IMR-90 (cell line): ENCODE measurements at regions of chr6 and their contacts with region 1.

Region 1: GRCh38 chr6:136547336-136547735 is 2.9 kb downstream of the MAP7 start:
- DNase-seq: peak; percentile 63
- ATAC-seq: no peak
- H3K4me3 ChIP-seq: no peak overlapping the region
- H3K27ac ChIP-seq: no peak overlapping the region
- H3K4me1 ChIP-seq: peaks cover 3% of the 10 kb centered on the region; the same call in 1 of the 2 replicates
- H3K27me3 ChIP-seq: peaks cover 42% of the 10 kb centered on the region
- CTCF ChIP-seq: peak; percentile 69
- POLR2A ChIP-seq: no peak
- RAD21 ChIP-seq: peak; percentile 67

Region 2: DNA sequence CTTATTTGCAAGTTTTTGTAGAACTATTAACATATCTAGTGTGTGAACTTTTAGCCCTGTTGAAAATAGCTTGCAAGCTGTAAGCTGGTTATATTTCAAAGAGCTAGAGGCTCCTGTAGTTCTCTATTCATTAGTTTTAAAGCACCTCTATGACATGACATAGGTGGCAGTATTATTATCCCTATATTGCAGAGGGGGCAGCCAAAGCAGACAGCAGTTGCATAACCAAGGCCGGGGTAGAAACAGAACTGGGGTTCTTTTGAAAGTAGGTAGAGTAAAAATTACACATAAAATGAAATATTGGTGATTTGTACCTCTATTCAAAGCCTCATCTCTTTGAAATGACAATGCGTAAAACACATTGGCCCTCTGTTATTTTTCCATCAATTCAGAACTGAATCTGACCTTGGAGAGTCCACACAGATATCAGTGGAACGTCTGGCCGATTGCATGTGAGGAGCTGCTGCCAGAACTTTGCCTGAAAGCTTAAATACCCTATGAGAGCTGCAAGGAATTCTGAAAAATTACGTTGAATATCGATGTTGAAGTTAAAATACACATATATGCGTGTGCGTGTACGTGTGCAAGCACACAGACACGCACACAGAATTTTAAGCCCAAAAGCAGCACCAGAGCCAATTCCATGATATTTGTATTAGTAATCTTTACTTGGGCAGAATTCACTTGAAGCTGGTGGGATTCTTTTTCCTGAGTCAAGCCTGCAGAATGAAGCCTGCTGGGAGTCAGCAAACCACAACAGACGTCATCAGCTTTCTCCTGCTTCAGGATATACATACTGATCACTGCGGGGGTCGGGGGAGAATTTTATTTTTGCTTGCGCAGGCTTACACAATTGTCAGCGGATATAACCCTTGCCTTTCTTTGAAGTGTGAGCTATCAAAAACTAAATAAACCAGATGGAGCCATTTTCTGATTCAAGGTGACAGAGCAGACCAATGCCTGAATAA is 532.6 kb before region 1 on chr6:
- CTCF ChIA-PET with region 1: no interaction called
- POLR2A ChIA-PET with region 1: no interaction called
- dilution Hi-C with region 1: no loop called
- in situ Hi-C with region 1: no loop called
- intact Hi-C with region 1: no loop called
- DNase-seq: peak; percentile 100
- ATAC-seq: peak; percentile 81
- H3K4me3 ChIP-seq: no peak overlapping the region
- H3K27ac ChIP-seq: peak overlapping the region; percentile 99
- H3K4me1 ChIP-seq: peaks cover 23% of the 10 kb centered on the region
- H3K27me3 ChIP-seq: no peaks in the 10 kb centered on the region
- CTCF ChIP-seq: no peak
- POLR2A ChIP-seq: peak; percentile 78
- RAD21 ChIP-seq: peak; percentile 22

Region 3: GRCh38 chr6:136249811-136250685 is 297.3 kb before region 1 on chr6 and contains the start of gene MTFR2:
- CTCF ChIA-PET with region 1: interaction called, 3 read pairs
- POLR2A ChIA-PET with region 1: no interaction called
- dilution Hi-C with region 1: no loop called
- in situ Hi-C with region 1: no loop called
- intact Hi-C with region 1: loop called (anchors 5 kb)
- DNase-seq: peak; percentile 99
- ATAC-seq: peak; percentile 93
- H3K4me3 ChIP-seq: peak within 1 kb of the TSS; percentile 70
- H3K27ac ChIP-seq: peak within 1 kb of the TSS; percentile 62
- H3K4me1 ChIP-seq: no peaks in the 10 kb centered on the region
- H3K27me3 ChIP-seq: no peaks in the 10 kb centered on the region
- CTCF ChIP-seq: no peak
- POLR2A ChIP-seq: peak; percentile 82
- RAD21 ChIP-seq: no peak
- total RNA-seq, gene MTFR2: 0.72 and 1.9 TPM in 2 replicates

Region 4: DNA sequence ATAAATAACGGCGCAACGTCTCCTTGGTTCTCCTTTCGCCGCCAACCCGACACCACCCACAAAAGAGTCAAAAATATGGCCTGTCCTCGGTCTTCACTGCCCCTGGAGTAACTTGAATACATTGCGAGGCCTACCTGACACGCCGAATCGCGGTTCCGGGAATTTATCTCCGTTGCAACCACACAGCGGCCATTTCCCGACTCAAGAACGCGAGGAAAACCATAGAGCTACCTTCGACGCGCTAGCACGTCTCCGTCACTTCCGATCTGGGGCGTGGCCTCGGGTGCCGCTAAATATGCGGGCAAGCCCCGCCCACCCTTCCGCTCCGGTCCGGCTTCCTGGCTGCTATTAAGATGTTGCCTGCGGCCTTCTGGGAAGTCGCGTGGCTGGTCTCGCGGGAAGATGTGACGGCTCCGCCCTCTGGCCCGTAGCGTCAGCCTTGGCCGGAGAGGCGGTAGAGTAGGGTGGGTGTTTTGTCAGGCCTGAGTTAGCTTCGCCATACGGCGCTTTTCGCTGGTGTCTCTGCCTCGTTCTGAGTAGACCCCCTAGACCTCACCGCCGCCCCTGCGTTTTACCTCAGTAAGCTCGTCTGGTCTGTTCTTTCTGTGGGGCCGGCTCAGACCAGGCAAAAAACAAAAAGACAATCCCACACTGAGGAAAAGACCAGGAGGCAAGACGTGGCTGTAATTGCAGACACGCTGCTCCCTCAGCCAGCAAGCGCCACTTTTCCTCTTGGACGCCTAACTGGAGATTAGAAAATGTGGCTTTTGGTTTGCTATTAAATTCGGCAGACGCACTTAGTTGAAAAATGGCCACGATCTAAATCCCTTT is 257.5 kb before region 1 on chr6 and contains the start of gene BCLAF1:
- CTCF ChIA-PET with region 1: no interaction called
- POLR2A ChIA-PET with region 1: no interaction called
- dilution Hi-C with region 1: no loop called
- in situ Hi-C with region 1: no loop called
- intact Hi-C with region 1: loop called (anchors 5 kb)
- DNase-seq: peak; percentile 99
- ATAC-seq: peak; percentile 92
- H3K4me3 ChIP-seq: peak within 1 kb of the TSS; percentile 71
- H3K27ac ChIP-seq: peak within 1 kb of the TSS; percentile 96
- H3K4me1 ChIP-seq: peaks cover 5% of the 10 kb centered on the region
- H3K27me3 ChIP-seq: no peaks in the 10 kb centered on the region; the same call in 1 of the 2 replicates
- CTCF ChIP-seq: no peak
- POLR2A ChIP-seq: peak; percentile 98
- RAD21 ChIP-seq: no peak
- total RNA-seq, gene BCLAF1: 141 and 142 TPM in 2 replicates

Region 5: DNA sequence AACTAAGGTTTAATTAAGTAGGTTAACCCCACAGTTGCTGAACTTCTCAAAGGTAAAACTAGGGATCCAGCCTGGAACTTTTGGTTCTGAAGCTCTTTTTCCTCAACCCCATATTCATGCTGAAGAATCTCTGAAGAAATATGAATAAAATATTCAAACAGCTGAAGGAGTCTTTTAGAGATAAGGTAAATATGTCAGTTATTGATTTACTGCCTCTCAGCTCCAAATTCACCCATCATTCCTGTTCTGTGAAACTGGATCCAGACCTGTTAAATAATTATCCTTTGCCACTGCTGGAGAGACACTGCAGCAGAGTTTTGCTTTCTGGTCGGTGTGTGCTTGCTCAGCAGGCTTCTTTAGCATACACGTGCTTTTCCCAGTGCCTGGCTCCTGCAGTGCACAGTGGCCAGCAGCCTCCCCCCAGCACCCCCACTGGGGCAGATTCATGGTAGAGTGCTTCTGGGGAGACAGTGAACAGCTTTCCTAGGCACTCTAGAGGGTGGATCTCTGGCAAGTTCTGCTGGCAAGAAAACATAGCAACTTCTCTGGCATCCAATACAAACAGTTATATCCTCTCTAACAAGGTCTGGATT is 195.7 kb before region 1 on chr6:
- CTCF ChIA-PET with region 1: no interaction called
- POLR2A ChIA-PET with region 1: no interaction called
- dilution Hi-C with region 1: no loop called
- in situ Hi-C with region 1: no loop called
- intact Hi-C with region 1: loop called (anchors 10 kb)
- DNase-seq: no peak
- ATAC-seq: peak; percentile 61
- H3K4me3 ChIP-seq: no peak overlapping the region
- H3K27ac ChIP-seq: no peak overlapping the region
- H3K4me1 ChIP-seq: no peaks in the 10 kb centered on the region; the same call in 1 of the 2 replicates
- H3K27me3 ChIP-seq: peaks cover 7% of the 10 kb centered on the region; the same call in 1 of the 2 replicates
- CTCF ChIP-seq: no peak
- POLR2A ChIP-seq: no peak
- RAD21 ChIP-seq: no peak

Region 6: DNA sequence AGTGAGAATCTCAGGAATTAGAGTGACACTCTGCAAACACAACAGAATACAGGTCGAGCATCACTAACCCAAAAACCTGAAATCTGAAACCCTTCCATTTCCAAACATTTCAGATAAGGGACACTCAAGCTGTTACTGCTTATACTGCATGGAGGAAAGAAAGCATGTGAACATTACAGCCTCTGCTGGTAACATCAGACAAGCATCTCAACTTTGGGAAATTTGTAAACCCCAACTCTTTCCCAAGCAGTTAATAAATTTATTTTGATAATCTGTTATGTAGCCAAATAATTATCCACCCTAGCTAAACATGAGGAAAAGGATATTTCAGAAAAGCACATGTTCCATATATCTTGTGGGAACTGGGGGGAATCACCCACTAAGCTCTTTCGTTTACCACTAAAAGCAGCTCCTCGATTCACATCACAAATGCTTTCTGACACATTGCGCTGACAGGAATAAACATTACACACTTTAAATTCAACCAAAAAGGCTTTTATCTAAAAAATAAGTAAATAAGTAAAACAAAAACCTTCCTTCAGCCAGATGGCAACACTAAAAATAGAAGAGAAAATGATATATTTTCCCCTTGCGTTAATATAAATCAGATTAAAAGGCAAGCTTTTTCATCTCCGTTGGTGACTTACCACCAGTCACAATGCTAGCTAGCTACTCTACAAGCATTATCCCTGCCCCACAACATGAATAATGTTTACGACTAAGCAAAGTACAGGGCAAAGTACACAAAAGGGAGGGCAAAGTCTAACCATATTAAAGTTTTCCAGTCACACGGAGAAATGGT is 117.9 kb before region 1 on chr6:
- CTCF ChIA-PET with region 1: no interaction called
- POLR2A ChIA-PET with region 1: no interaction called
- dilution Hi-C with region 1: no loop called
- in situ Hi-C with region 1: no loop called
- intact Hi-C with region 1: no loop called
- DNase-seq: no peak
- ATAC-seq: no peak
- H3K4me3 ChIP-seq: no peak overlapping the region
- H3K27ac ChIP-seq: no peak overlapping the region
- H3K4me1 ChIP-seq: no peaks in the 10 kb centered on the region
- H3K27me3 ChIP-seq: peaks cover 29% of the 10 kb centered on the region
- CTCF ChIP-seq: no peak
- POLR2A ChIP-seq: no peak
- RAD21 ChIP-seq: no peak

Region 7: GRCh38 chr6:136685540-136686108 is 138.3 kb after region 1 on chr6:
- CTCF ChIA-PET with region 1: no interaction called
- POLR2A ChIA-PET with region 1: no interaction called
- dilution Hi-C with region 1: no loop called
- in situ Hi-C with region 1: no loop called
- intact Hi-C with region 1: no loop called
- DNase-seq: peak; percentile 21
- ATAC-seq: no peak
- H3K4me3 ChIP-seq: no peak overlapping the region
- H3K27ac ChIP-seq: no peak overlapping the region
- H3K4me1 ChIP-seq: peaks cover 2% of the 10 kb centered on the region; the same call in 1 of the 2 replicates
- H3K27me3 ChIP-seq: no peaks in the 10 kb centered on the region
- CTCF ChIP-seq: no peak
- POLR2A ChIP-seq: no peak
- RAD21 ChIP-seq: no peak

Region 8: DNA sequence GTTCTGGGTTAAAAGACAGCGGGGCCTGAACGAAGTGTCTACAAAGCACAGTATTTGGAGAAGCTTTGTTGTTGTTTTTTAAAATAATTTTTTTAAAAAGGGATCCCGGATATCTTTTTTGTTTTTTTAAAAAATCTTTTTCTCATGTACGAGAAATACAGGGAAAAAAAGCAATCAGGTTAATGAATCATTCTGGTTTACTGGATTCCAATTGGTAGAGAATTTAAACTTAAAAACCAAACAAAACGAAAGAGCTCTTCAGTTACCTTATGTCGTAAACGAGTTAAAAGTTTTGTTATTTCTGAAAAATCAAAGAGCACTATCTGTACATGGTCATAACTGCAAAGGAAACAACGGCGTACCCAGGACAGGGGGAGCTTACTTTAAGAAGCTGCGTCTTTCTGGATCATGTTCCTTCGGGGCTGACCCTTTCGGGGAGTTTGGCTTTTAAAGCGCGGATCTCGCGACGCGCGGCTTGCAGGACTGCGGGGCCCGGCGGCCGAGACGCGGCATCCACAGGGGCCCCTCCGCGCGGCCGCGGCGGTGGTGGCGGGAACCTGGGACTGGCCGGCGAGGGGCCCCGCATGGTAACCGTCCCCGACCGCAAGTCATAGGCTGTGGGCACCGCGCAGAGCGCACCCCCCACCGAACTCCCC is 496.5 kb after region 1 on chr6:
- CTCF ChIA-PET with region 1: no interaction called
- POLR2A ChIA-PET with region 1: no interaction called
- dilution Hi-C with region 1: no loop called
- in situ Hi-C with region 1: no loop called
- intact Hi-C with region 1: no loop called
- DNase-seq: peak; percentile 28
- ATAC-seq: peak; percentile 81
- H3K4me3 ChIP-seq: peak overlapping the region; percentile 94
- H3K27ac ChIP-seq: no peak overlapping the region
- H3K4me1 ChIP-seq: no peaks in the 10 kb centered on the region
- H3K27me3 ChIP-seq: peaks cover 44% of the 10 kb centered on the region
- CTCF ChIP-seq: no peak
- POLR2A ChIP-seq: no peak
- RAD21 ChIP-seq: no peak